ENCODE measurements at regions of chr9 and their contacts with region 1.

Region 1: DNA sequence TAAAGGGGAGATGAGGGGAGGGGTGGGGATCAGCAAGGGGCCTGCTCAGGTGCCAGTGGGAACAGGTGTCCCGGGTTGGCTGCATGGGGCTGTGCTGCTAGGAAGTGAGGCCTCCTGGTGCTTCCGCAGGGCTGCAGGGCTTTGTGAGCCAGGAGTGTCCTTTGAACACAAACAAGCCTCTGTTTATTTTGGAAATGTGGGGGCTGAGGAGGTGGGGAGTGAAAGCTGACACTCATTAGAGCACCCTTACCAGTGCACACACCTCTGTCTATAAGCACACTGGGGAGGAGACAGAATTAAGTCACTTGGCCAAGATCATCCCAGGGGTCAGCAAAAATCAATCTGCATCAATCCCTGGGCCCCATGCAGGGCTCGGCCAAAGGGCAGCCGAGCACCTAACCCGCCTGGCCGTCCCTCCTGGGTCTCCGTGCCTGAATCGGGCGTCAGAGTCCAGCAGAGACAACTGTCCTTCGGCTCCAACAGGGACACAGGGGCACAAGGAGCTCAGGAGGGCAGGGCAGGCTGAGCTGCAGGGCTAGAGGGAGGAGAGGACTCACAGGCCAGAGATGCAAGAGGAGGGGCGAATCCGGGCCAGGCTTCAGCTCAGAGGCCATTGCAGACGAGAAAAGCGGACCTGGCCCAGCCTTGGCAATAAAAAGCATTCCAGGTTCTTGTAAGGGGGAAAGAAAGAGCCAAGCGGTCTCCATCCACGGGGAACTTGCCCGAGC is 99.8 kb downstream of the VAV2 start:
- DNase-seq: peak; percentile 88 to 93
- H3K4me3 ChIP-seq: no peak overlapping the region
- H3K4me3 Mint-ChIP-seq: peak overlapping the region; percentile 74
- H3K27ac Mint-ChIP-seq: peak overlapping the region; percentile 97
- H3K4me1 ChIP-seq: peaks cover 59% of the 10 kb centered on the region
- H3K4me1 Mint-ChIP-seq: peaks cover 43% of the 10 kb centered on the region
- H3K27me3 ChIP-seq: no peaks in the 10 kb centered on the region
- H3K27me3 Mint-ChIP-seq: no peaks in the 10 kb centered on the region
- CTCF ChIP-seq: no peak

Region 2: GRCh38 chr9:133874056-133874642 is 18.2 kb before region 1 on chr9:
- CTCF ChIA-PET with region 1: interaction called, 3 read pairs
- POLR2A ChIA-PET with region 1: no interaction called
- intact Hi-C with region 1: loop called (anchors 2 kb)
- DNase-seq: peak; percentile 69 to 87
- H3K4me3 ChIP-seq: no peak overlapping the region
- H3K4me3 Mint-ChIP-seq: peak overlapping the region; percentile 24
- H3K27ac Mint-ChIP-seq: peak overlapping the region; percentile 60
- H3K4me1 ChIP-seq: peaks cover 27% of the 10 kb centered on the region
- H3K4me1 Mint-ChIP-seq: peaks cover 25% of the 10 kb centered on the region
- H3K27me3 ChIP-seq: no peaks in the 10 kb centered on the region
- H3K27me3 Mint-ChIP-seq: no peaks in the 10 kb centered on the region
- CTCF ChIP-seq: no peak

Region 3: DNA sequence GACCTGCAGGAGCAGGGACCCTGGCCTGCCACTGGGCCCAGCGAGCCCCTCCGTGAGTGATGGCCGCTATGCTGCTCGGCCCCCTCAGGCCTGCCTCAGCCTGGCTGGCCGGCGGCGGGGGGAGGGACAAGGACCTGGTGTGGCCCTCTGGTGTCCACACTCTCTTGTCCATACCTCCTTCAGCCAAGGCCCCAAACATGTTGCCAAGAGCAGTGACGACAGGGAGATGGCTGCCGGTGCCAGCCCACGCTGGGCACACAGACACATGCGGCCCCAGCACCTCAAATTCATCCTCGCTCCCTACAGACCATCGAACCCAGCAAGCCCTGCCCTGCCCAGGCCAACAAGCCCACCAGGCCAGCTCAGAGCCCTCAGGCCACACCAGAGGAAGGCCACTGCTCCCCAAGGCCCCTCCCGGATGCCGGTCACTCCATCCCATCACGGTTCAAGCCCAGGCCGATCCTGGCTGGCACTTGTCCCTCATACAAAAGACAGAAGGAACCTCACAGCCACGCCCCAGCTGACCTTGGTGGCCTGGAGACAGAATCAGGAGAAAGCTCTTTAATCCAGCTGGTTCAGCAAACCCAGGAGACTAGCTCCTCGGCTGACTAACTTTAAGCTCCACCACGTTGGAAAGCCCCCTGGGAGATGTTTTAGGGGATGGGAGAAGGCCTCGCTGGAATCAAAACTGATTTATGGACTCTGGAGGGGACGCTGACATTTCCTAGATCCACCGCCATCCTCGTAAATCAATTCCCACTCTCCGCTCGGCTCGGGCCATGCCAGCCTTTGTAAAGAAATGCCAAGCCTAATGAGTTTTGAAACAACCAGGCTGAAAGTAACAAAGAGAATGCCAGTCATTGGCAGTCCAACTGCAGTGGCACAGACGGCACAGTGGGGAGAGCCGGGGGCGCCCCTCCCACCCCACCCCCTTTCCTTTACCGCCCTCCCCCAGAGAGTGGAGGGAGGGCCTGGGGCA is 14.9 kb after region 1 on chr9:
- CTCF ChIA-PET with region 1: no interaction called
- POLR2A ChIA-PET with region 1: no interaction called
- intact Hi-C with region 1: no loop called
- DNase-seq: no peak
- H3K4me3 ChIP-seq: no peak overlapping the region
- H3K4me3 Mint-ChIP-seq: no peak overlapping the region
- H3K27ac Mint-ChIP-seq: no peak overlapping the region
- H3K4me1 ChIP-seq: no peaks in the 10 kb centered on the region
- H3K4me1 Mint-ChIP-seq: no peaks in the 10 kb centered on the region
- H3K27me3 ChIP-seq: no peaks in the 10 kb centered on the region
- H3K27me3 Mint-ChIP-seq: no peaks in the 10 kb centered on the region
- CTCF ChIP-seq: no peak